ENCODE measurements at regions of chr1 and their contacts with region 1.

Region 1: DNA sequence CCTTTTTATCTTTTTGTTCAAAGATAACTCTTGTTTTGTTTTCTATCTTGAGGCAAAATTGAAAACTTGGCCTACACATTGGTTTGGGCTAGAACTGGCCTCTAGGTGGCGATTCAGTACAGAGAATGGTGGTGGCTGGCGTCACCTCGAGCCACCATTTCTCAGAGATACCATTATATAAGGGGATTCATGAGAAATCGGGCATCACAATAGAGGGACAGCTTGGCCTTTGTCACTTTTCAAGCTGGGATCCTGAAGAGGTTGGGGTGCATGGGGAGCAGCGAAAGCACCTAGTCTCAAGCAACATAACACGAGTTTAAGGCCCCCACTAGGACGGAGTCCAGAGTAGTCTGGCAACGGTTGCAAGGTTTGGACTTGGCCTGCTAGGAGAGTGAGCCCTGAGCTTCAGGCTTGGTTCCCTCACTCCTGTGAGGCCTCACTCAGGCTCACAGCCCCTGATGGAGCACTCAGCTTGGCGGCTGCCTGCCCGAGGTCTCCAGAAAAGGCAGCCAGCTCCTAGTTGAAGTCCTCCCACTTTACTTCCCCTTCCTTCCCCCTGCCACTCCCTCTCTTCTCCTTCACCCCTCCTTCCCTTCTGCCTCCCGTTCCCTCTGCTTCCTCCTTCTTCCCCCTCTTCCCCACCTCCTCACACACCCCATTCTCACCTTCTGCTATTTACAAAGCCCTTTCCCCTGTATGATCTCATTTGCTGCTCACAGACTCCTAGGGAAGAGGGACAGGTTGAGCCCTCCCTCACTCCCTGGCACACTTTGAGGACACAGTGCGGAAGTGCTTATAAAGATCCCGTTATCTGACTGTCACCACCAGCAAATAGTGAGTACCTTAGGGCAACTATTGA is 67.8 kb downstream of the LRIG2 start:
- DNase-seq: peak; percentile 39
- ATAC-seq: peak; percentile 96
- H3K4me3 ChIP-seq: no peak overlapping the region
- H3K27ac ChIP-seq: no peak overlapping the region
- H3K4me1 ChIP-seq: no peaks in the 10 kb centered on the region
- H3K27me3 ChIP-seq: no peaks in the 10 kb centered on the region
- CTCF ChIP-seq: peak; percentile 77

Region 2: GRCh38 chr1:112715264-112716053 is 425.4 kb before region 1 on chr1 and contains the start of gene PPM1J:
- CTCF ChIA-PET with region 1: no interaction called
- POLR2A ChIA-PET with region 1: no interaction called
- in situ Hi-C with region 1: no loop called
- intact Hi-C with region 1: no loop called
- DNase-seq: no peak
- ATAC-seq: peak; percentile 82
- H3K4me3 ChIP-seq: peak within 1 kb of the TSS; percentile 53 to 64
- H3K27ac ChIP-seq: no peak within 1 kb of the TSS
- H3K4me1 ChIP-seq: no peaks in the 10 kb centered on the region; the same call in 1 of the 2 replicates
- H3K27me3 ChIP-seq: no peaks in the 10 kb centered on the region
- CTCF ChIP-seq: no peak
- total RNA-seq, gene PPM1J: 0.51 TPM

Region 3: GRCh38 chr1:113118266-113118665 is 22.6 kb before region 1 on chr1:
- CTCF ChIA-PET with region 1: no interaction called
- POLR2A ChIA-PET with region 1: no interaction called
- in situ Hi-C with region 1: no loop called
- intact Hi-C with region 1: no loop called
- DNase-seq: no peak
- ATAC-seq: no peak
- H3K4me3 ChIP-seq: no peak overlapping the region
- H3K27ac ChIP-seq: no peak overlapping the region
- H3K4me1 ChIP-seq: no peaks in the 10 kb centered on the region
- H3K27me3 ChIP-seq: no peaks in the 10 kb centered on the region
- CTCF ChIP-seq: no peak

Region 4: DNA sequence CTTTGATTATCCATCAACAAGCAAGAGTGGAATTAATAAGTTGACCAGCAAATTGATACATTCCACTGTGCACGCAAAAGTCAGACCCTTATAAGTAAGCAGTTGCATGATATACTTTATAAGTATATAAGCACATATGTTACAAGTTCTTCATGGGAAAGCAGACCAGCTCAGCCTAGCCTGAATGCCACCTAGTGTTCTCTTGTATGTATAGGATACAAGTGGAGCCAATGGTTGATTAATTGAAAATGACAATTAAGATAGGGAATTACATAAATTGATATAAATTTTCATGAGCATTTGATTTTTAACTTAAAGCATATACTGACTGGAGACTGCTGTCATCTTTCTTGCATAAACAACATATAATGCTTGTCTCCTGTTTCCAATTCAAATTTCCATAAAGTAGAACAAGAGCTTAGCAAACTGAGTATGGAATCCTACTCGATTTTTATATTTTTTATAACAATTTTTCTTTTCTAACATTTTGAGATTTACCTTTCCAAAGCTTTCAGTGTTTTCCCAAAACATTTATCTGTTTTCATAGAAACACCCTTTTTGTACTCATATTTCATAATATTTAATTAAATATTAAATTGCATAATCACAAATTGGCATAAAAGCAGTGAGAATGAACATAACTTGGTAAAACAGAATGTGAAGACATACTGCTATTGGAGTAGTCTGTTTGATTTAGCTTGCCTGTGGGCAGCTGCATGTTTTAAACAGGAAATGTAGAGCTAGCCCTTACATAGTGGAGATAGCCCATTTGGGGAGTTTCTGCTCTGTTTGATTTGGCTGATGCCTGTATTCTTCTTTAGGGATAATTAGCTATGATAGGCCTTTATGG is 312.3 kb after region 1 on chr1:
- CTCF ChIA-PET with region 1: no interaction called
- POLR2A ChIA-PET with region 1: no interaction called
- in situ Hi-C with region 1: no loop called
- intact Hi-C with region 1: loop called (anchors 5 kb)
- DNase-seq: no peak
- ATAC-seq: 0 out of 2 replicates have a peak, but pooled peaks have one; percentile 57
- H3K4me3 ChIP-seq: no peak overlapping the region
- H3K27ac ChIP-seq: no peak overlapping the region
- H3K4me1 ChIP-seq: peaks cover 14% of the 10 kb centered on the region
- H3K27me3 ChIP-seq: no peaks in the 10 kb centered on the region
- CTCF ChIP-seq: peak; percentile 53; the same call in 1 of the 2 replicates